ENCODE measurements at regions of chr11 and their contacts with region 1.

Region 1: GRCh38 chr11:46489661-46490560 is 98.3 kb upstream of the CHRM4 start:
- H3K4me3 Mint-ChIP-seq: no peak overlapping the region
- H3K27ac Mint-ChIP-seq: no peak overlapping the region
- H3K4me1 Mint-ChIP-seq: no peaks in the 10 kb centered on the region
- H3K27me3 Mint-ChIP-seq: no peaks in the 10 kb centered on the region

Region 2: GRCh38 chr11:46438211-46438610 is 51.7 kb before region 1 on chr11:
- intact Hi-C with region 1: no loop called
- H3K4me3 Mint-ChIP-seq: no peak overlapping the region
- H3K27ac Mint-ChIP-seq: no peak overlapping the region
- H3K4me1 Mint-ChIP-seq: no peaks in the 10 kb centered on the region
- H3K27me3 Mint-ChIP-seq: no peaks in the 10 kb centered on the region

Region 3: GRCh38 chr11:46529928-46530574 is 40.1 kb after region 1 on chr11:
- intact Hi-C with region 1: loop called (anchors 2 kb)
- H3K4me3 Mint-ChIP-seq: no peak overlapping the region
- H3K27ac Mint-ChIP-seq: no peak overlapping the region
- H3K4me1 Mint-ChIP-seq: peaks cover 40% of the 10 kb centered on the region
- H3K27me3 Mint-ChIP-seq: no peaks in the 10 kb centered on the region